Right cardiac atrium (tissue), 5 donors: ENCODE measurements at regions of chr1 and their contacts with region 1.

Region 1: DNA sequence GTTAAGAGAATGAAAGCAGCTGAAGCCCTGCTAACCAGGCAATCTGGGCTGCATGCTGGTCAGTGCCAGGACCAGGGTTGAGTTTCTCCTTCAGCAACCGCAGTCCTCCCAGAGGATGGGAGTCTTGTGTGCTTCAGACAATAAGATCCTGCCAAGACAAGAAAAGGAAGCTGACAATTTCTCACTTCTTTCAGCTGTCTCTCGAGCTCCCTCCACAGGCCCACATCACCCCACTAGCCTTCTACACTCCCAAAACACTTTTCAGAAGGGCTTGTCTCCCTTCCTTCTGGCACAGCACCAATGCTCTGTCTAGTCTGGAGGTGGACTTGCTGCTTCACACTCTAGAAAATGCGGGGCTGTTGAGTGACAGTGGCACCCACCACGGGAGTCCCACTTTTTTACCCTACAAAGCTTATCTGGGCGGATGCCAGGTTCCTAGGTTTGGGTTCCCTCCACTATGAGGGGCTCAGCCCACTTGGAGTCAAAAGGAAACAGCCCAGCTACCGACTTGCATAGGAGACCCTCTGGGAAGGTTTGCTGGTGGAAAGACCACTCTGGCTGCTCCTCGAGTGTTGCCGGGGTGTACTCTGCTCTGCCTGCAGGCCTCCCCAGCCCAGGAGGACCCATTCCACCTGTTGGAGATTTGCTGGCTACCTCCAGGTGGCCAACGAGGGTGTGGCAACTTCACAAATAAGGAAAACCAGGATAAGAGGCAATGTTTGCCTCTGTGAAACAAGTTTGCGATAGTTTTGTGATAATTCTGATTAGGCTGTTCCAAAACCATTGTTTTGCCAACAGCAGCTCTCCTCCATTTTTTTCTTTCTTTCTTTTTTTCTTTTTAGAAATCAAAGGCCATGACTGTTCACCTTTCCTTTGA is 68.9 kb downstream of the TENT5C start:
- DNase-seq: peak; percentile 39 to 71 (median 44)
- ATAC-seq: no peak
- H3K4me3 ChIP-seq: no peak overlapping the region
- H3K27ac ChIP-seq: peak overlapping the region; percentile 59
- H3K4me1 ChIP-seq: peaks cover 4% of the 10 kb centered on the region
- H3K27me3 ChIP-seq: no peaks in the 10 kb centered on the region

Region 2: DNA sequence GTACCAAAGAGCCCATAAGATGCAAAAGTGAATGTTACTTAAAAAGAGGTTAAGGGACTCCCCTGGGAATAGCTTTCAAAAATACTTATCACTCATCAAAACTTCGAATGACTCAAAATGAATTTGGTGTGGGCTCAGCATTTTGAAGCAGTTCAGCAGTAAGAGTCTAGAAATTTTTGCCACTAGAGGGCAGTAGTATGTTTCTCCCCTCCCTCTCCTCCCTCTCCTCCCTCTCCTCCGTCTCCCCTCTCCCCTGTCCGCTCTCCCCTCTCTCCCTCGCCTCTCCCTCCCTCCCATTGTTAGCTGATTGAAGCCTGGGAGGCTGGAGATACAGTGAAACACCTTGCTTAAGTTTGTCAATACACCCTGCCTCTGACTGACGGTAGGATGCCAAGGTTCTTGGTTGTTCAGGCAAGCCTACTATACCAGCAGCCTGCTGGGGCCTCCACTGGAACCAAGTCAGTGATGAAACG is 139.7 kb before region 1 on chr1:
- intact Hi-C with region 1: loop called in 3 of 4 experiments (anchors 5 to 10 kb)
- DNase-seq: no peak
- ATAC-seq: peak; percentile 89 to 91
- H3K4me3 ChIP-seq: no peak overlapping the region
- H3K27ac ChIP-seq: no peak overlapping the region
- H3K4me1 ChIP-seq: no peaks in the 10 kb centered on the region
- H3K27me3 ChIP-seq: no peaks in the 10 kb centered on the region

Region 3: GRCh38 chr1:117541003-117541402 is 133.8 kb before region 1 on chr1:
- intact Hi-C with region 1: loop called in 3 of 4 experiments (anchors 5 to 10 kb)
- DNase-seq: peak in 1 of 3 donors; percentile 48
- ATAC-seq: peak in 1 of 2 donors; percentile 26
- H3K4me3 ChIP-seq: no peak overlapping the region
- H3K27ac ChIP-seq: no peak overlapping the region
- H3K4me1 ChIP-seq: no peaks in the 10 kb centered on the region
- H3K27me3 ChIP-seq: no peaks in the 10 kb centered on the region

Region 4: DNA sequence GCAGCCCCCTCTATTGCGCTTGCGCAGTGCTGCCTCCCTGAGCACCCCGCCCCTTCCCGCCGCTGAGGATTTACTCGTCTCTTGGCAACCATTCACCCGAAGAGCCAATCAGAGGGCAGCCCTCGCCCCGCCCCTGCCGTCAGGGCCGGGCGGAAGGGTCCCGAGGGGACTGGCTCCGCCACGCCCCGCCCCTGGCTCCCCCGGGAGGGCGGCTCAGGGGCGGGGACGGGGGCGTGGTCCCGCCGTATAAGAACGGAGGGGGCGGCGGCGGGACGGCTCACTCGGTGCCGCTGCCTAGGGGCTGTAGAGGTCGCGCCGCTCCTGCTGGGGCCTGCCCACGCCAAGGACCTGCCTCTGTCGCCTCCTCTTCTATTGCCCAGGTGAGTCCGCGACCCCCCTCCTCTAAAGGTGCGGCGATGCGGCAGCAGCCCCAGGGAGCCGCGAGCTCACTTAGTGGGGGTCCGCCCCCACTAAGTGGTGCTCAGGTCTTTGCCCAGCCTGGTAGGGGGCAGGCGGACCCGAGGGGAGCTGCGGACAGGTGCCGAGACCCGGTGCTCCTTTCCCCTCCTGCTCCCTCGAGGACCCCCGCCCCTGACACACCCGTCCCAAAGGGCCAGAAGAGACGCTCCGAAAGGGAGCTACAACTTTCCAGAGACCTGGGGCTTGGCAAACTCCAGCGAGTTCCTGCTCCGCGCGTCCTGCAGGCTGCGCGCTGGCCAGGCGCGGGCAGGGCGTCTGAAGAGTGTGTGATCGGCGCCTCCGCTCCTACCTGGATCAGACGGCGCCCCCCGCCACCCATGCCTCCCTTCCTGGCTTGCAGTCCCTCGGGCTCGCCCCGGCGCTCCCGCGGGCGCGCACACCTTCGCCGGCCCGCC is 68.7 kb before region 1 on chr1 and contains the start of gene TENT5C:
- intact Hi-C with region 1: loop called (anchors 2 to 10 kb)
- DNase-seq: peak; percentile 97 to 99 (median 99)
- ATAC-seq: peak; percentile 97 to 99
- H3K4me3 ChIP-seq: peak within 1 kb of the TSS; percentile 72
- H3K27ac ChIP-seq: peak within 1 kb of the TSS; percentile 76
- H3K4me1 ChIP-seq: peaks cover 8% of the 10 kb centered on the region
- H3K27me3 ChIP-seq: no peaks in the 10 kb centered on the region
- total RNA-seq, gene TENT5C: 20.4 to 33.1 (median 31.7) TPM

Region 5: GRCh38 chr1:117612517-117613248 is 62.1 kb before region 1 on chr1:
- intact Hi-C with region 1: loop called (anchors 2 to 10 kb)
- DNase-seq: no peak
- ATAC-seq: peak; percentile 44 to 62
- H3K4me3 ChIP-seq: no peak overlapping the region
- H3K27ac ChIP-seq: peak overlapping the region; percentile 93
- H3K4me1 ChIP-seq: peaks cover 24% of the 10 kb centered on the region
- H3K27me3 ChIP-seq: no peaks in the 10 kb centered on the region

Region 6: GRCh38 chr1:117735045-117735992 is 60.6 kb after region 1 on chr1:
- intact Hi-C with region 1: no loop called
- DNase-seq: no peak
- ATAC-seq: peak; percentile 60 to 71
- H3K4me3 ChIP-seq: peak overlapping the region; percentile 51
- H3K27ac ChIP-seq: no peak overlapping the region
- H3K4me1 ChIP-seq: peaks cover 2% of the 10 kb centered on the region
- H3K27me3 ChIP-seq: no peaks in the 10 kb centered on the region

Region 7: DNA sequence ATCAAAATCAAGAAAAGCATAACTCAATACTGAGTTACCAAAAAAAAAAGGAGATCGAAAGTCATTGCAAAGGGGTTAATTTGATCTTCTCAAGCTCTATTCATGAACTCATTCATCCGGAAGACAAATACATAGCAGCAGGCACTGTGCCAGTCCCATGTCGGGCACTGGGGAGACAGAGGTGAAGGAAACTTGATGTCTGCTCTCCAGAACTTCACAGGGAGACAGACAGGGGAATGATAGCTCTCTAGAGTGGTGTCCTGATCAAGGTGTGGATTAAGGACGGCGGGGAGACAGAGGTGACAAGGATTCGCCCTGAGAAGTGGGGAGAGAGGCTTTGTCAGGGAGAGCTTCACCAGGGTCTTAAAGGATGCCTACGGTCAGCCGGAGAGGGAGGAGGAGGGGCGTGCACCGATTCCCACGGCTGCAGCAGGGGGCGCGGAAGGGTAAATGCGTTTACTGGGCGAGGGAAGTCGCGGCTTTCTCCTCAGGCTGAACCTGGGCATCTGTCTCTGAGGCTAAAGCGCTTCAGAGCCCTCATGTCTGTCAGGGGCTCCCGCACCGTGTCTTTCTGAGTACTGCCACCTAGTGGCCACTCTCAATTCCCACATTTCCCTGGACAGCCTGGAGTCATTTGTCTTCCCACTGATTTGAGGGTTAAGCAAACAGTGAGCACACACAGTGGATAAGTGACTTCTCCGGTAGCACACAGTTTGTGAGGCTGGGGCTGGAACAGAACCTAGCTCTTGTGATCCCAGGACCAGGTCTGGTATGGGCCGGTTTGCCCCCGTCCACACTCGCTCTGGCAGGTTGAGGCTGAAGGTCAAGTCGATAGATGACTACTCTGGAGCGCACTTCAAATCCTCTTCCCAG is 83.9 kb after region 1 on chr1:
- intact Hi-C with region 1: no loop called
- DNase-seq: peak; percentile 60 to 76 (median 75)
- ATAC-seq: peak; percentile 95 to 96
- H3K4me3 ChIP-seq: peak overlapping the region; percentile 36
- H3K27ac ChIP-seq: no peak overlapping the region
- H3K4me1 ChIP-seq: no peaks in the 10 kb centered on the region
- H3K27me3 ChIP-seq: no peaks in the 10 kb centered on the region

Region 8: DNA sequence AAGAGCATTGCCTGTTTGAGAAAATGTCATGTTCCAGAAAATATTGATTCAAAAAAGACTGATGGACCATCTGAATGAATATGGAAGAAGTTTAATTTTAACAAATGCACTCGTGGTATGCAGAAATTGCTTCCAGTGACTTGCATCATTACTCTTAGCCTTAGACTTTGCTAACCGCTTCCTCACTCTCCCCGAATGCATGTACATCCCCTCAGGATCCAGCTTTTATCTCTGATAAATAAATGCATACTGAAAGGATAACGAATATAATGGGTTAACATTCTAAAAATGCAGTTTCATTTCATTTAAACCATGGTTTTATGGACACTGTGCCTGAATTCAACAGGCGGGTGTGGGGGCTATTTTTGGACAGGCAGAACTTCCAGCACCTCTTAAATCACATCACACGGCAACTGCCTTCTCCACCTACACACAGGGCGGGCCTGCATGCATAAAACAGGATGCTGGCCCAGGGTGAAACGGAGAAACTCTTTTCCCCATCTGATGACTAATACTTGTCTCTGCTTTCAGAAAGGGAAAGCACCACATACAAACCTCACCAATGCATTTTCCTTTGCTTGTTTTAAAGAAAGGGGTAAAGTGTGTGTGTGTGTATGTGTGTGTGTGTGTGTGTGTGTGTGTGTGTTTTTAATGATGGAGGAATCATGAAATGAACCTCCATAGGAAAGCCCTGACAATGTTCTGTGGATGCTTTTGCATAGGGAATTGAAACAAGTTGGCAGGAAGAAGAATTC is 461.6 kb after region 1 on chr1:
- intact Hi-C with region 1: no loop called
- DNase-seq: peak in 1 of 3 donors; percentile 55
- ATAC-seq: peak in 1 of 2 donors; percentile 48
- H3K4me3 ChIP-seq: no peak overlapping the region
- H3K27ac ChIP-seq: no peak overlapping the region
- H3K4me1 ChIP-seq: no peaks in the 10 kb centered on the region
- H3K27me3 ChIP-seq: no peaks in the 10 kb centered on the region